Dendritic cell treated with granulocyte-macrophage colony-stimulating factor and Interleukin-4, amounts not matched to agents 40 ng/mL and 50 ng/mL, for 4 days (primary cell): ENCODE measurements at regions of chr3 and their contacts with region 1.

Region 1: GRCh38 chr3:177197041-177197727 is at the start of gene TBL1XR1:
- H3K4me3 Mint-ChIP-seq: peak within 1 kb of the TSS; percentile 94
- H3K27ac Mint-ChIP-seq: peak within 1 kb of the TSS; percentile 99
- H3K4me1 Mint-ChIP-seq: peaks cover 40% of the 10 kb centered on the region
- H3K27me3 Mint-ChIP-seq: no peaks in the 10 kb centered on the region

Region 2: GRCh38 chr3:177141899-177142646 is 55.1 kb before region 1 on chr3:
- intact Hi-C with region 1: no loop called
- H3K4me3 Mint-ChIP-seq: no peak overlapping the region
- H3K27ac Mint-ChIP-seq: peak overlapping the region; percentile 16
- H3K4me1 Mint-ChIP-seq: peaks cover 59% of the 10 kb centered on the region
- H3K27me3 Mint-ChIP-seq: no peaks in the 10 kb centered on the region

Region 3: DNA sequence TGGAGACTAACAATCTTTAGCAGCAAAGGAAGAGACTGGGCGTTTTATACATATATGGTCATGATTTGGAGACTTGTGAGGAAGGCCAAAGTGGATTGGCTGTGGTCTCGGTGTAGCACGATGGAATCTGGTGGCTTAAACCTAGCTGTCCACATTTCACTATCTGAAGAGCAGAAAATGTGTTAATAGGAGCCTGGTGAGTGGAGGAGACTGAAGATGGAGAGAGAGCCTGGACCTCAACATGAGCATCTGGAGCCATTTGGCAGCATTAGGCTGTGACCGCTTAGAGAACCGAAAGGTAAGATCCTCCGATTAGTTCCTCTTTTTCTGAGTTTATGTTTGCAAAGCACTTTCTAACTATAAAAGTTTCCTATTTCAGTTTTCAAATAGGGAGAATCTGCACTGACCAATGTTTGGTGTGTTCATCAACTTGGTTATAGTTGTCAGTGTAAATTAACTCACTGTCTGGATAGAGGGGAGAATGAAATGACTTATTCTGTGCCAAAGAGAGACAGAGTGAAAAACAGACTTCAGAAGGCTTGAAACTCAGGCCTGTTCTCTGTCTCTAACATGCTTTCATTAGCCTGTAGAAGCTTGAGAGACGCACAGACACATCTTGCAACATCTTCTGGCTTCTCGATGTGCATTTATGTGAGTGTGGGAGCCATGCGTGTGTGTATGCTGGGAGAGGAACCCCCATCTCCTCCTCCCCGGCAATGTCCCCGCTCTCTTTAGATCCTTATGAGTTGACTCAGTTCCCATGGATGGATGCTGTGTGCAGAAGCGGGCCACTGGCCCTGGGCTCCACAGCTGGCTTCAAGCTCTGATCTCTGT is 244.8 kb after region 1 on chr3:
- intact Hi-C with region 1: loop called (anchors 5 kb)
- H3K4me3 Mint-ChIP-seq: no peak overlapping the region
- H3K27ac Mint-ChIP-seq: peak overlapping the region; percentile 55
- H3K4me1 Mint-ChIP-seq: peaks cover 29% of the 10 kb centered on the region
- H3K27me3 Mint-ChIP-seq: no peaks in the 10 kb centered on the region